ENCODE measurements at regions of chr3 and their contacts with region 1.

Region 1: GRCh38 chr3:171901615-171902312 is 58.6 kb downstream of the TMEM212 start:
- DNase-seq: no peak
- ATAC-seq: peak in 3 of 4 donors; percentile 28 to 37 (median 33)
- H3K4me3 ChIP-seq: no peak overlapping the region
- H3K27ac ChIP-seq: no peak overlapping the region
- H3K4me1 ChIP-seq: peaks cover 0 to 4% (median 0%) of the 10 kb centered on the region in 4 donors
- H3K27me3 ChIP-seq: no peaks in the 10 kb centered on the region
- CTCF ChIP-seq: no peak
- POLR2A ChIP-seq: no peak

Region 2: GRCh38 chr3:171950373-171950772 is 48.6 kb after region 1 on chr3:
- intact Hi-C with region 1: loop called in 1 of 2 experiments (anchors 10 kb)
- DNase-seq: no peak
- ATAC-seq: peak in 1 of 4 donors; percentile 78
- H3K4me3 ChIP-seq: no peak overlapping the region
- H3K27ac ChIP-seq: no peak overlapping the region
- H3K4me1 ChIP-seq: no peaks in the 10 kb centered on the region
- H3K27me3 ChIP-seq: no peaks in the 10 kb centered on the region
- CTCF ChIP-seq: no peak
- POLR2A ChIP-seq: no peak

Measured in right lobe of liver (tissue), 6 donors.